ENCODE measurements at regions of chr5 and their contacts with region 1.

Region 1: DNA sequence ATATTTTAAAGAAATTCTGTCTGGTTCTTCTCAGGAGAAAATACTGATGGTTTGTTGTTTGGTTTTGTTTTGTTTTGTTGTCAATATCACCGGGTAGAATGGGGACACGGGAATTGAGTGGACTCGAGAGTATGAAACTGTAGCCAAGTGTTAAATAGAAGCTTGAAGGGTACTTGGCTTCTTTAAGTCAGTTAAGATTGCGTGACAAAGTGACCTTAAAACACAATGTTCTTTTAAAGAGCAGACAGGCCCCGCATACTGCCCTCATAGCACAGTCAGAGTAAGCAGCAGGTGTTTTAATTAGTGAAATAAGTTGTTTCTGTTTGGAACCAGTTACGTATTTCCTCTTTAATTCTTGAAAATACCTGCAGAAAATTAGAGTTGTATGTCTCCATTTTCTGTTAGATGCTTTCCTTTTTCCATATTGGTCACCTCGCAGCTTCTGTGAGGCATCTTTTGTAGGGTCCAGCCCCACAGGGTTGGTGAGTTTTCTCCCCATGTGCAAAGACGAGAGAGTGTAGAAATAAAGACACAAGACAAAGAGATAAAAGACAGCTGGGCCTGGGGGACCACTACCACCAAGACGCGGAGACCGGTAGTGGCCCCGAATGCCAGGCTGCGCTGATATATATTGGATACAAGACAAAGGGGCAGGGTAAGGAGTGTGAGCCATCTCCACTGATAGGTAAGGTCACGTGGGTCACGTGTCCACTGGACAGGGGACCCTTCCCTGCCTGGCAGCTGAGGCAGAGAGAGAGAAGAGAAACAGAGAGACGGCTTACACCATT is 9.6 kb downstream of the TRIP13 start:
- DNase-seq: no peak
- ATAC-seq: no peak
- H3K4me3 ChIP-seq: no peak overlapping the region
- H3K27ac ChIP-seq: no peak overlapping the region
- H3K4me1 ChIP-seq: no peaks in the 10 kb centered on the region
- H3K27me3 ChIP-seq: no peaks in the 10 kb centered on the region
- CTCF ChIP-seq: no peak
- POLR2A ChIP-seq: no peak
- RAD21 ChIP-seq: no peak

Region 2: DNA sequence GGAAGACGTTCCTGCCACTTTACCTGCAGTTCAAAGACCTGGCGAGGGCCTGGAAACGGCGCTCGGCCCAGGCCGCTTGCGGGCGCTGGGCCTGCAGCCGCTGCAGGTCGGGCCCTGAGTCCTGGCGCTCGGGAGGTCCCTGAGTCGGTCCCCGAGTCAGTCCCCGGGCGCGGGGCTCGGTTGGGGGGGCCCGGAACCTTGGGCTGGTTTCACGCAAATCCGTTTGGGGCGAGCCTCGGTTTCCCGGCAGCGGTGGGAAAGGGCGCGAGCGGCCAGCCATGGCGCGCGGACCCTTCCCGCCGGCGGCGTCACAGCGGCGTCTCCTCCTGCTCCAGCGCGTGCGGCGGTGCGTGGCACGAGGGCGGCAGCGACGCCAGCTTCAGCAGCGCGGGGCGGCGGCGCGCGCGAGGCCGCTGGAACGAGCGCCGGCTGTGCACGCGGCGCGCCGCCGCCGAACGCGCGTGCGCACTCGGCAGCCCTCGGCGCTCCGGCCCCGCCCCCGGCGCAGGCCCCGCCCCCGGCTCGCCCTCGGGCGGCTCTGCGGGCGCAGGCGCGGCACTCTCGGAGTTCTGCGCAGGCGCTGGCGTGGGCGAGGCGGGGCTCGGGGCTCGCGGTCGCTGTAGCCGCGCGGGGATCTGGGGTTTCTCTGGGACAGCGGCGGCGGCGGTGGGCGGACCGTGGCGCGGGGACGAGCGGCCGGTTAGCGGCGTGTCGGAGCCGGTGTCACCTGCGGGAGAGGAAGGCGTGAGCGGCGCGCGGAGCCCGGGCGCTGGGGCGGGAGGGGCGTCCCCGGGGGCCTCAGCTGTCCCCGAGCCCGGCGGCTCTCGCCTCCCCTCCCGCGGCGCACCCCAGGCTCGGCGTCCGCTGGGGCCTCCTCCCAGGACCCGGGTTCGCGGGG is 429.4 kb before region 1 on chr5:
- CTCF ChIA-PET with region 1: no interaction called
- POLR2A ChIA-PET with region 1: no interaction called
- dilution Hi-C with region 1: no loop called
- in situ Hi-C with region 1: no loop called
- intact Hi-C with region 1: loop called (anchors 10 kb)
- DNase-seq: peak; percentile 78
- ATAC-seq: peak; percentile 92
- H3K4me3 ChIP-seq: peak overlapping the region; percentile 79
- H3K27ac ChIP-seq: peak overlapping the region; percentile 62
- H3K4me1 ChIP-seq: peaks cover 7% of the 10 kb centered on the region; the same call in 1 of the 2 replicates
- H3K27me3 ChIP-seq: no peaks in the 10 kb centered on the region
- CTCF ChIP-seq: no peak
- POLR2A ChIP-seq: peak; percentile 58
- RAD21 ChIP-seq: no peak

Region 3: GRCh38 chr5:671459-672328 is 230.6 kb before region 1 on chr5:
- CTCF ChIA-PET with region 1: interaction called, 3 read pairs
- POLR2A ChIA-PET with region 1: no interaction called
- dilution Hi-C with region 1: no loop called
- in situ Hi-C with region 1: loop called (anchors 5 kb)
- intact Hi-C with region 1: loop called (anchors 2 kb)
- DNase-seq: peak; percentile 26
- ATAC-seq: peak; percentile 93
- H3K4me3 ChIP-seq: no peak overlapping the region
- H3K27ac ChIP-seq: no peak overlapping the region
- H3K4me1 ChIP-seq: no peaks in the 10 kb centered on the region; the same call in 1 of the 2 replicates
- H3K27me3 ChIP-seq: peaks cover 15% of the 10 kb centered on the region; the same call in 1 of the 2 replicates
- CTCF ChIP-seq: peak; percentile 86
- POLR2A ChIP-seq: no peak
- RAD21 ChIP-seq: peak; percentile 85

Measured in IMR-90 (cell line).